Activated naive CD4-positive, alpha-beta T cell treated with anti-CD3 and anti-CD28 coated beads for 36 hours (primary cell): ENCODE measurements at regions of chr2 and their contacts with region 1.

Region 1: DNA sequence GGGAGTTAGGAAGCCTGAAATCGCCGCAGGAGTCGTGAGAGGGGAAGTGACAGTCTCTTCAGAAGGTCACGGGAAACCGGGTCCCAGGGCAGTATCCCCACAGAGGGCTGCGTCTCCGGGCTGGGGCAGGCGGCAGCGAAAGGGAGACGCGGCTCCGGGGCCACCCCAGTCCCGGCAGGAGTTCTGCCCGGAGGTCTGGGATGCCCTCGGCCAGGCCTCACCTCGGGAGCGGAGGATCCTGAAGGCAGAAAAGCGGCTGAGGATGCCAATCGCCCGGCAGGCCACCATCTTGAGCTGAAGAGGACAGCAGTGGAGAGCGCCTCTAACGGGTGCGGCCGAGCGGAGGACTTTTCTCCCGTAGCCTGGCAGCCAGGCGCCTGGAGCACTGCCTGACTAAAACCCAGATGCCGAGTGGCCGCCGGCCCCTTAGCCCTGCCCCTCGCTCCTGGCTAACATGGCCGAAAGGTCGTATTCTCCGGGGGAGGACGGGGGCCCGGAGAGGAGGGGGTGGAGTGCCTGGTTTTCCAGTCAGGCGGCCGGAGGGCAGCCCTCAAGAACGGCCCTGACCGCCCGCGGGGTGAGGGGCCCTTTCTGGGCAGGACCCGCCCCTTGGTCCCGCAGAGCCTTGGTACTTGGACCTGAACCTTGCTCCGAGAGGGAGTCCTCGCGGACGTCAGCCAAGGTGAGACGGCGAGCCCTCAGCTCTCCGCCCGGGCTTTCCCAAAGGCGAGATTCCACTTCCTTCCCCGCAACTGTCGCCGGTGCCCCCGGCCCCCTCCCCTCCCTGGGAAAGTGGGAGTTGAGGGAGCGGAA is at the starts of genes HADHA and HADHB:
- DNase-seq: peak; percentile 85
- H3K4me3 Mint-ChIP-seq: peak within 1 kb of the TSS; percentile 99
- H3K27ac Mint-ChIP-seq: peak within 1 kb of the TSS; percentile 97
- H3K4me1 Mint-ChIP-seq: peaks cover 46% of the 10 kb centered on the region
- H3K27me3 Mint-ChIP-seq: no peaks in the 10 kb centered on the region
- total RNA-seq, gene HADHA: 117 to 123 TPM
- total RNA-seq, gene HADHB: 65.1 to 67.6 TPM

Region 2: DNA sequence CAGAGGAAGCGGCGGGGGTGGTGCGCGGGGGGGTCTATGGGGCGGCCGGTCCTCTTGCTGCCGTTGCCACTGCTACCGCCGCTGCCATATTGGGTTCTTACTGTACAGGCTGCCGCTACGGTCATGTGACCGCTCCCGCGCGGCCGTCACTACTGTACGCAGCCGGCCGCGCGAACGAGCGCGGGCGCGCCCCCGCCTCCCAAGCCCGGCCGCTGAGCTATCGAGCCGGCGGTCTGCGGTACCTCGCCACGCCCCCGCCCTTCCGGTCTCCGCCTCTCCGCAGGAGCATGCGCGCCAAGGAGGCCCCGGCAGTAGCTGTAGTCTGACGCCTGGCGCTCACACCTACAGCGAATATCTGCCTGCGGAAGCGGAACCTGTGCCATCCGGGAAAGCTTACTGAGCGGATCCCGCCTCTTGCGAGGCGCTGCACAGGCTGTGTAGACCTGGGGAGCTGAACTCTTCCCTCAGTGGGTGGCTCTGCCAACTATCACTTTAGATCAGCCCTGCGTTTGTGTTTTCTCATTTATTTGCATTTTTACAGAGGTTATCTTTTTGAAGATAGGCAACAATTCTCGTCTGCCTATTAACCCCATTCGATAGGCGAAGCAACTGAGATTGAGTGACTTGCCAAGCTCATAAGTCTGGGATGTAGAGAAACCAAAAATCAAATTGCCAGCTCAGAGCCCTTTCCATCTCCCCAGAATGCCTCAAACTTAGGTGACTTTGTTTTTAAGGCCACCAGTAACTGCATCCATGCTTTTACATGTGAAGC is 366.0 kb before region 1 on chr2 and contains the start of gene ASXL2:
- CTCF ChIA-PET with region 1: no interaction called
- intact Hi-C with region 1: loop called (anchors 1 kb)
- DNase-seq: peak; percentile 97
- H3K4me3 Mint-ChIP-seq: peak within 1 kb of the TSS; percentile 91
- H3K27ac Mint-ChIP-seq: peak within 1 kb of the TSS; percentile 96
- H3K4me1 Mint-ChIP-seq: peaks cover 43% of the 10 kb centered on the region
- H3K27me3 Mint-ChIP-seq: no peaks in the 10 kb centered on the region
- total RNA-seq, gene ASXL2: 25.2 to 29.1 TPM

Region 3: GRCh38 chr2:26184555-26185303 is 59.8 kb before region 1 on chr2:
- CTCF ChIA-PET with region 1: interaction called, 4 read pairs
- intact Hi-C with region 1: loop called (anchors 1 kb)
- DNase-seq: peak; percentile 84
- H3K4me3 Mint-ChIP-seq: peak overlapping the region; percentile 72
- H3K27ac Mint-ChIP-seq: no peak overlapping the region
- H3K4me1 Mint-ChIP-seq: peaks cover 17% of the 10 kb centered on the region
- H3K27me3 Mint-ChIP-seq: peaks cover 12% of the 10 kb centered on the region

Region 4: GRCh38 chr2:26299471-26300101 is 55.1 kb after region 1 on chr2:
- CTCF ChIA-PET with region 1: no interaction called
- intact Hi-C with region 1: loop called (anchors 1 kb)
- DNase-seq: peak; percentile 51
- H3K4me3 Mint-ChIP-seq: no peak overlapping the region
- H3K27ac Mint-ChIP-seq: no peak overlapping the region
- H3K4me1 Mint-ChIP-seq: no peaks in the 10 kb centered on the region
- H3K27me3 Mint-ChIP-seq: no peaks in the 10 kb centered on the region

Region 5: GRCh38 chr2:26345545-26346453 is 101.3 kb after region 1 on chr2 and contains the start of gene SELENOI:
- CTCF ChIA-PET with region 1: interaction called, 4 read pairs
- intact Hi-C with region 1: loop called (anchors 1 kb)
- DNase-seq: peak; percentile 99
- H3K4me3 Mint-ChIP-seq: peak within 1 kb of the TSS; percentile 90
- H3K27ac Mint-ChIP-seq: peak within 1 kb of the TSS; percentile 94
- H3K4me1 Mint-ChIP-seq: peaks cover 27% of the 10 kb centered on the region
- H3K27me3 Mint-ChIP-seq: no peaks in the 10 kb centered on the region
- total RNA-seq, gene SELENOI: 20.0 to 22.9 TPM